ENCODE measurements at regions of chr4 and their contacts with region 1.

Region 1: GRCh38 chr4:25144870-25145481 is 15.3 kb downstream of the SEPSECS start:
- DNase-seq: no peak
- H3K4me3 Mint-ChIP-seq: no peak overlapping the region
- H3K27ac Mint-ChIP-seq: no peak overlapping the region
- H3K4me1 Mint-ChIP-seq: no peaks in the 10 kb centered on the region
- H3K27me3 Mint-ChIP-seq: no peaks in the 10 kb centered on the region

Region 2: DNA sequence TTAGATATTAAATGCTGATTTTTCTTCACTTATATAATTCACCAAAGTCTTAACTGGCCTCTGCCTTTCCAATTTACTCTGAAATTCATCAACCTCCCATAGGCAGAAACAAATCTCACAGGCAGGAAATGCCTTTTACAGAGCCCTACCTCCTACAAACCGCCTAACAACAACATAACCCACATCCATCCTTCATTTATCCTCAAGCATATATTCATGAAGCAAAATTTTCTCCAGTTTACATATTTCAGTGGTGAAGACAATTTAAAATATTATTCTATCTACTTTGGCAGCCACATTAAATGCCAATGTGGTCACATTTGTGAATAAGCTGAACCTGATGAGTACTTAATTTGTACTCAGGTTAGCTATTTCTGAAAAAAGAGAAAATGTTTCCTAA is 15.1 kb before region 1 on chr4:
- CTCF ChIA-PET with region 1: interaction called, 10 read pairs
- POLR2A ChIA-PET with region 1: no interaction called
- DNase-seq: no peak
- H3K4me3 Mint-ChIP-seq: no peak overlapping the region
- H3K27ac Mint-ChIP-seq: no peak overlapping the region
- H3K4me1 Mint-ChIP-seq: peaks cover 5% of the 10 kb centered on the region
- H3K27me3 Mint-ChIP-seq: no peaks in the 10 kb centered on the region

Measured in activated CD4-positive, alpha-beta T cell treated with anti-CD3 and anti-CD28 coated beads, Interleukin-2, amount 10 ng/mL, durations not matched to agents 7 days and 5 days (primary cell).